Astrocyte of the cerebellum (primary cell): ENCODE measurements at regions of chr9 and their contacts with region 1.

Region 1: DNA sequence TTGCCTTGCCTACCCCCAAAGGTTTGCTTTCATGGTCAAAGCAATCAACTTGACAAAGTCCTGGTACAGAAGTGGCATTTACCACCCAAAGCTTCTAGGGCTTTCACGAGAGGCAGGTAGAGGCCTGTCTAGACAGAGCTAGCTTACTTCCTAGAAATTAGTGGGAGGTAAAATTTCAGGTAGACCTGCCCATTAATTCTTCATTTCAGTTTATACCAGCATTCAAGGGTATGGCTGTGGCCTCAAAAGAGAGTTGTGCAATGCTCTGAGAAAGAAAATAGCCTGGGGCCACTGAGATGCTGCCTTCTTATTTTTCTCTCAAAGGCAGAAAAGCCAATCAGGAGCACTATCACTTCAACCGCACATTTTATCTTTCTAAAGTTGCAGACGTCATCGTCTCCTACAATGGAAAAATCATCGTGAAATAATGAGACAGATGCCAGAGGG is 34.9 kb downstream of the STOM start:
- DNase-seq: no peak
- H3K4me3 ChIP-seq: no peak overlapping the region
- CTCF ChIP-seq: no peak

Region 2: GRCh38 chr9:121369595-121370265 is 34.6 kb after region 1 on chr9 and contains the start of gene STOM:
- in situ Hi-C with region 1: no loop called
- DNase-seq: peak; percentile 29
- H3K4me3 ChIP-seq: peak within 1 kb of the TSS; percentile 55
- CTCF ChIP-seq: no peak

Region 3: DNA sequence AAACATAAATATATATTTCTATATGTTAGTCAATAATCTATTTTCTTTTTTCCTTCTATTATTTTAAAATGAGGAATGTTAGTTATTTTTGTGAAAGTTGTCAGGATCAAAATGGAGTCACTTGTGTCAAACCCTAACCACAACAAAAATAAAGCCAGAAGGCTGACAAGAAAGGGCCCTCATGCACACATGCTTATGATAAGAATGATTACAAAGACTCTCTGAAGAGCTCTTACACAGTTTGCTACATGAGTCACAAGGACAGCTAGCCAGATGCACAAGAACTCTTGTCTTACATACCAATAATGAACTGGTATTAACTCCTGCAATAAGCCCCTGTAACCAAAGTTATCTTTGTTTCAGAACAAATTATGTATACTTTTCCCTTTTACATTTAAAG is 99.8 kb after region 1 on chr9:
- in situ Hi-C with region 1: loop called (anchors 5 kb)
- DNase-seq: no peak
- H3K4me3 ChIP-seq: no peak overlapping the region
- CTCF ChIP-seq: no peak

Region 4: DNA sequence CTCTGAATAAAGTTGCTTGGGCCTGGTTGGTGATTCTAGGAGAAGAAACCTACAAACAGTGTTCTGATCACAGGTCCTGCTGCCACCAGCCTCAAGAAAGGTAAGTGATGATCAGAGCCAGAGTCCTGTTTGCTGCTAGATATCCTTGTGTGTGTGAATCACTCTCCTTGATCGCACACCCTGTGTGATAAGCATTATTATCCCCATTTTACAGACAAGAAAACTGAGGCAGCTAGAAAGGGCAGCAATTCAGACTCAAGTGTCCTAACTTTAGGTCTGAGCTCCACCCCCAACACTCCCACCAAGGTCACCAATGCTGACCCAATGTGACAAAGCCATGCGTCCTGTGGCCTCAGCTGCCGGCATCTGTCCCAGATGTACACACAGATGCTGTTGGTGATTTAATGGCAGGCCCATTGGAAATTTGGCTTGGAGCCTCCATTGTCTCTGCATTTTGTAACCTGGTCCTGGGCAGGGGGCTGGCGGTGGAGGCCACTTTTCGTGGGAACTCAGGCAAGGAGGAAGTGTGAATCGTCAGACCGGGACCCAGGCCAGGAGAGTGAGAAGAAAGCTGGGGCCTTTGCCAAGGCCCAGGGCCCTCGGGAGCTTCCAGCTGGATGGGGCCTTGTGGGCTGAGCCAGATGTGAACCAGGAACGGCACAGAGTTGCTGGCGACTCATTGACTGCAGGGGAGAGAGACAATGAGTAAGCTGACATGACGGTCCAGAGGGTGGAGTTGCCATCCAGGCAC is 194.2 kb after region 1 on chr9:
- in situ Hi-C with region 1: no loop called
- DNase-seq: peak; percentile 93
- H3K4me3 ChIP-seq: no peak overlapping the region
- CTCF ChIP-seq: no peak